Body of pancreas (tissue), 4 donors: ENCODE measurements at regions of chr17 and their contacts with region 1.

Region 1: GRCh38 chr17:21100636-21101035 is 26.1 kb upstream of the DHRS7B start:
- DNase-seq: no peak
- ATAC-seq: no peak
- H3K4me3 ChIP-seq: no peak overlapping the region
- H3K27ac ChIP-seq: no peak overlapping the region
- H3K4me1 ChIP-seq: peaks cover 12% of the 10 kb centered on the region
- H3K27me3 ChIP-seq: no peaks in the 10 kb centered on the region
- CTCF ChIP-seq: no peak
- POLR2A ChIP-seq: no peak

Region 2: DNA sequence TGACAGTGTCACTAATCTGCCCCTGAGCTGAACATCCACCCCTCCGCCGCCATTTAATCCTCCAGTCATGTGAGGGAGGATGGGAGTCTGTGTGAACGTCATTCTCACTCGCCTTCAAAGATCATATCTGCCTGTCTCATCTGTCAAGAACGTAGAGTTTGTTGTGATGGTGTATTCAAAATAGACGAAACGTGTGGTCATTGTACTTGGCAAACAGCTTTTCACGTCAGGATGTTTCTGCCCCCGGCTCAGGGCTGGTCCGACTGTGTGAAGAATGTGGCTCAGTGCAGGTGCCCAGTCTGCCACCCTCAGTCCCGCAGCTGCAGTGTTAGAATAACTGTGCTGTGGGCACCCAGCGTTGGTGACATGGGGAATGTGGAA is 423.6 kb after region 1 on chr17:
- intact Hi-C with region 1: loop called (anchors 10 kb)
- DNase-seq: no peak
- ATAC-seq: no peak
- H3K4me3 ChIP-seq: no peak overlapping the region
- H3K27ac ChIP-seq: no peak overlapping the region
- H3K4me1 ChIP-seq: no peaks in the 10 kb centered on the region
- H3K27me3 ChIP-seq: no peaks in the 10 kb centered on the region
- CTCF ChIP-seq: no peak
- POLR2A ChIP-seq: no peak